Right ventricle myocardium inferior (tissue), 1 donor: ENCODE measurements at regions of chr15 and their contacts with region 1.

Region 1: GRCh38 chr15:71386448-71387236 is 271.4 kb downstream of the THSD4 start:
- DNase-seq: no peak
- ATAC-seq: no peak

Region 2: DNA sequence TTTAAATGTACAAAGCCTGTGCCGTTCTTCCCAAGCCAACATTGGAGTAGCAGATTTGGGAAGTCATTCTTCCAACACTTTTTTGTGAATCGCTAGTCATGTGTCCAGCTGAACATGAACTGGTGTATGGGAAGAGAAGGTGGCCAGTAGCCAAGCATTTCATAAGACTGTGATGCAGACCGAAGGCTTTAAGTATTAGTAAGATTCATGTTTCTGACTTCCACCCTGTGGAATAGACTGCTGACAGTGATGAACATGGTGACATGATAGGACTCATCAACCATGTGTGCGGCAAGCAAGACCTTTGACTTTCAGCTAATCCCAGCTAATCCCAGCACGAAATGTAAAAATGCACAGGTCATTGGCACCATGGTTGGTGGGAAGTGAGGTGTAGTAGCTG is 319.7 kb before region 1 on chr15:
- intact Hi-C with region 1: no loop called
- DNase-seq: no peak
- ATAC-seq: peak; percentile 78

Region 3: GRCh38 chr15:71337207-71337700 is 49.4 kb before region 1 on chr15:
- intact Hi-C with region 1: no loop called
- DNase-seq: no peak
- ATAC-seq: no peak

Region 4: GRCh38 chr15:71424765-71425164 is 38.1 kb after region 1 on chr15:
- intact Hi-C with region 1: loop called (anchors 5 kb)
- DNase-seq: no peak
- ATAC-seq: no peak

Region 5: GRCh38 chr15:71443538-71443937 is 56.9 kb after region 1 on chr15:
- intact Hi-C with region 1: loop called (anchors 2 kb)
- DNase-seq: no peak
- ATAC-seq: no peak